ENCODE measurements at regions of chr11 and their contacts with region 1.

Region 1: GRCh38 chr11:122863704-122864326 is 18.7 kb upstream of the JHY start:
- DNase-seq: peak; percentile 20 to 37
- ATAC-seq: peak in 1 of 2 experiments; percentile 46; a peak in 1 of 6 replicates
- H3K4me3 ChIP-seq: no peak overlapping the region
- H3K27ac ChIP-seq: no peak overlapping the region
- H3K4me1 ChIP-seq: no peaks in the 10 kb centered on the region
- CTCF ChIP-seq: peak; percentile 83
- EP300 ChIP-seq: no peak
- POLR2A ChIP-seq: no peak
- RAD21 ChIP-seq: peak; percentile 78 to 84

Region 2: DNA sequence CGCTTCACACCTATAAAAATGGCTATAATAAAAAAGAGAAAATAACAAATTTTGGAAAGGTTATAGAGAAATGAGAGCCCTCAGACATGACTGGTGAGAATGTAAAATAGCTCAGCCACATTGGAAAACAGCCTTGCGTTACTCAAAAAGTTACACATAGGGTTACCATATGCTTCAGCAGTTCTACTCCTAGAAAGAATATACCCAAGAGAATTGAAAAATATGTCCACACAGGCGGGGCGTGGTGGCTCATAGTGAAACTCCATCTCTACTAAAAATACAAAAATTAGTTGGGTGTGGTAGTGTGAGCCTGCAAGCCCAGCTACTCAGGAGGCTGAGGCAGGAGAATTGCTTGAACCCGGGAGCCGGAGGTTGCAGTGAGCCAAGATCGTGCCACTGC is 11.2 kb after region 1 on chr11:
- CTCF ChIA-PET with region 1: interaction called, 28 read pairs
- POLR2A ChIA-PET with region 1: no interaction called
- DNase-seq: no peak
- ATAC-seq: no peak
- H3K4me3 ChIP-seq: no peak overlapping the region
- H3K27ac ChIP-seq: no peak overlapping the region
- H3K4me1 ChIP-seq: peaks cover 2% of the 10 kb centered on the region; the same call in 2 of the 3 replicates
- CTCF ChIP-seq: no peak
- EP300 ChIP-seq: no peak
- POLR2A ChIP-seq: no peak
- RAD21 ChIP-seq: no peak

Region 3: GRCh38 chr11:123046473-123047259 is 182.9 kb after region 1 on chr11:
- CTCF ChIA-PET with region 1: interaction called, 16 read pairs
- POLR2A ChIA-PET with region 1: no interaction called
- DNase-seq: no peak
- ATAC-seq: peak in 1 of 2 experiments; percentile 10; a peak in 1 of 6 replicates
- H3K4me3 ChIP-seq: no peak overlapping the region
- H3K27ac ChIP-seq: no peak overlapping the region
- H3K4me1 ChIP-seq: no peaks in the 10 kb centered on the region
- CTCF ChIP-seq: no peak
- EP300 ChIP-seq: no peak
- POLR2A ChIP-seq: no peak
- RAD21 ChIP-seq: no peak

Region 4: DNA sequence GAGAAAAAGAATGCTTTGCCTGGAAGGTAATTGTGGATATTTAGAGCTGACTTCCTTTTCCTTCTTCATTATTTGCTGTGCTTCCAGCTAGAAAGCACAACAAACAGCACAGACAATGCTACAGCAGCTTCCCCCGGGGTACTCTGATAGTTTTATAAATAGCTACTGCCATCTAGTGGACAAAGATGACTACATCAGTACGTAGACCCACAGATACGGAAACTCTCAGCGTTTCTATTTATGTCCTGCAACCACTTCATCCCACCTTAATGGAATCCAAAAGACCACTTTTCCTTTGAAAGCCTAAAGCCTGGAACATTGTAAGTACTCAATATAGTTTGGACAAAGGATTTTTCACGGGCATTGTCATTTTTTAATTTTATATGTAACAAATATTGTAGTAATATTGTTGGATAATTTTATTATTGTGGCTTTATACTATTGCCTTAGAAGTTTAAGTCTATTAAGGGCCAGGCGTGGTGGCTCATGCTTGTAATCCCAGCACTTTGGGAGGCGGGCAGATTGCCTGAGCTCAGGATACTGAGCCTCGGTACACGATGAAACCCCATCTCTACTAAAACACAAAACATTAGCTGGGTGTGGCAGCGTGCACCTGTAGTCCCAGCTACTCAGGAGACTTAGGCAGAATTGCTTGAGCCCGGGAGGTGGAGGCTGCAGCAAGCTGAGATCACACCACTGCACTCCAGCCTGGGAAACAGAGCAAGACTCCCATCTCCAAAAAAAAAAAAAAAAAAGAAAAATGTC is 190.7 kb after region 1 on chr11:
- CTCF ChIA-PET with region 1: interaction called, 16 read pairs
- POLR2A ChIA-PET with region 1: no interaction called
- DNase-seq: peak; percentile 55 to 70
- ATAC-seq: peak; percentile 76 to 92
- H3K4me3 ChIP-seq: no peak overlapping the region
- H3K27ac ChIP-seq: no peak overlapping the region
- H3K4me1 ChIP-seq: peaks cover 44% of the 10 kb centered on the region
- CTCF ChIP-seq: peak; percentile 60
- EP300 ChIP-seq: no peak
- POLR2A ChIP-seq: no peak
- RAD21 ChIP-seq: peak; percentile 28 to 31; a peak in 1 of 5 replicates